ENCODE measurements at regions of chr15 and their contacts with region 1.

Region 1: GRCh38 chr15:56918046-56918938 is at the start of gene TCF12:
- DNase-seq: peak; percentile 83
- ATAC-seq: peak; percentile 85
- H3K4me3 ChIP-seq: peak within 1 kb of the TSS; percentile 90
- H3K27ac ChIP-seq: peak within 1 kb of the TSS; percentile 26
- H3K4me1 ChIP-seq: peaks cover 21% of the 10 kb centered on the region
- H3K27me3 ChIP-seq: no peaks in the 10 kb centered on the region
- CTCF ChIP-seq: peak; percentile 44; the same call in 1 of the 2 replicates
- total RNA-seq, gene TCF12: 78.3 and 103 TPM in 2 replicates

Region 2: GRCh38 chr15:56732921-56733797 is 185.1 kb before region 1 on chr15 and contains the start of gene ZNF280D:
- CTCF ChIA-PET with region 1: no interaction called
- POLR2A ChIA-PET with region 1: no interaction called
- intact Hi-C with region 1: loop called (anchors 10 kb)
- DNase-seq: peak; percentile 73
- ATAC-seq: peak; percentile 84
- H3K4me3 ChIP-seq: peak within 1 kb of the TSS; percentile 95
- H3K27ac ChIP-seq: peak within 1 kb of the TSS; percentile 65
- H3K4me1 ChIP-seq: peaks cover 25% of the 10 kb centered on the region
- H3K27me3 ChIP-seq: no peaks in the 10 kb centered on the region
- CTCF ChIP-seq: no peak
- total RNA-seq, gene ZNF280D: 7.4 and 8.7 TPM in 2 replicates

Region 3: DNA sequence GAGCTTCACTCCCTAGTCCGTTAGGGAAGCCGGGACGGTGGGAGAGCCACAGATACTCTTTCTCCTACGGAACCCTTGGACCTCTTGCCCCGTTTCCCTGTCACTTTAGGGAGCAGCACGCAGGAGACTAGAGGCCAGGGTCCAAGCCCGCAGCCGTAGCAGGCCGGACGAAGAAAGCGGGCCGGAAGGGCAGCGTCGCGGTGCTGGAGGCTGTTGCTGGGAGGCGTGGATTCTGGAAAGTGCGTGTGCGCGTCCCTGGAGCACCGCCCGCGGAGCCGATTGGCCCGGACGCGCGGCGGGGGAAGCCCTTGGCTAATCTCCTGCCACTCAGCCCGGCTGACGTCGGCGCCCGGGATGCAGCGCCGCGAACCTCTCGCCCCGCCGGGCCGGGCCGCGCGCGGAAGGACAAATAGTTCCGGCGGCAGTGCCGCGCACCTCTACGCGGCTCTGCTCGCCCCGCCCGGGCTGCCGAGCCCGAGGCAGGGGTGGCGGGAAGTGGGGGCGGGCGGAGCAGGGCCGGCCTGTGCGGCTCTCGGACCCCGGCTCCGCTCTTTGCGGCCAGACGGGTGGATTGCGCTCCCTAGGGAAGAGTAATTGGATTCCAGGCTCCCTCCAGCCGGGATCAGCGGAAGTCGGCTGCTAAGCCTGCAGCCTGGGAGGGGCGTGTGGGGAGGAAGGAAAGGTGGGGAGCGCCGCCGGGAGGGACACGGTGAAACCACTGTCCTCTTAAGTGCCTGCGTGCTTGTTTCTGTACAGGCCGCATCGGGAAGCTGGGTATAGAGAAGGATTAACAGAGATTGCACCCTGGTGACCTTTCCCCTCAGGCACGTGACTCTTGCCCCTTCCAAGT is 31.1 kb before region 1 on chr15:
- CTCF ChIA-PET with region 1: no interaction called
- POLR2A ChIA-PET with region 1: interaction called, 3 read pairs
- intact Hi-C with region 1: loop called (anchors 1 kb)
- DNase-seq: peak; percentile 90
- ATAC-seq: peak; percentile 94
- H3K4me3 ChIP-seq: peak overlapping the region; percentile 82
- H3K27ac ChIP-seq: peak overlapping the region; percentile 87
- H3K4me1 ChIP-seq: peaks cover 14% of the 10 kb centered on the region
- H3K27me3 ChIP-seq: no peaks in the 10 kb centered on the region
- CTCF ChIP-seq: no peak

Region 4: GRCh38 chr15:57138349-57138788 is 220.1 kb after region 1 on chr15:
- CTCF ChIA-PET with region 1: no interaction called
- POLR2A ChIA-PET with region 1: no interaction called
- intact Hi-C with region 1: loop called (anchors 5 kb)
- DNase-seq: peak; percentile 66
- ATAC-seq: peak; percentile 67; the same call in 1 of the 2 replicates
- H3K4me3 ChIP-seq: no peak overlapping the region
- H3K27ac ChIP-seq: no peak overlapping the region
- H3K4me1 ChIP-seq: no peaks in the 10 kb centered on the region
- H3K27me3 ChIP-seq: no peaks in the 10 kb centered on the region
- CTCF ChIP-seq: peak; percentile 78

Region 5: GRCh38 chr15:57213862-57214261 is 295.6 kb after region 1 on chr15:
- CTCF ChIA-PET with region 1: no interaction called
- POLR2A ChIA-PET with region 1: interaction called, 4 read pairs
- intact Hi-C with region 1: loop called (anchors 5 kb)
- DNase-seq: peak; percentile 55
- ATAC-seq: peak; percentile 27
- H3K4me3 ChIP-seq: no peak overlapping the region
- H3K27ac ChIP-seq: no peak overlapping the region
- H3K4me1 ChIP-seq: peaks cover 32% of the 10 kb centered on the region
- H3K27me3 ChIP-seq: no peaks in the 10 kb centered on the region
- CTCF ChIP-seq: peak; percentile 66

Measured in PC-3 (cell line).